AG04449 (cell line): ENCODE measurements at regions of chr3 and their contacts with region 1.

Region 1: GRCh38 chr3:138329127-138329983 is at the start of gene NME9:
- DNase-seq: no peak
- H3K4me3 ChIP-seq: peak within 1 kb of the TSS; percentile 62
- CTCF ChIP-seq: peak; percentile 74

Region 2: GRCh38 chr3:138180375-138181029 is 148.9 kb before region 1 on chr3:
- CTCF ChIA-PET with region 1: interaction called, 11 read pairs
- POLR2A ChIA-PET with region 1: no interaction called
- DNase-seq: no peak
- H3K4me3 ChIP-seq: no peak overlapping the region
- CTCF ChIP-seq: peak; percentile 22

Region 3: GRCh38 chr3:138271189-138271794 is 58.1 kb before region 1 on chr3:
- CTCF ChIA-PET with region 1: no interaction called
- POLR2A ChIA-PET with region 1: no interaction called
- DNase-seq: no peak
- H3K4me3 ChIP-seq: no peak overlapping the region
- CTCF ChIP-seq: no peak

Region 4: DNA sequence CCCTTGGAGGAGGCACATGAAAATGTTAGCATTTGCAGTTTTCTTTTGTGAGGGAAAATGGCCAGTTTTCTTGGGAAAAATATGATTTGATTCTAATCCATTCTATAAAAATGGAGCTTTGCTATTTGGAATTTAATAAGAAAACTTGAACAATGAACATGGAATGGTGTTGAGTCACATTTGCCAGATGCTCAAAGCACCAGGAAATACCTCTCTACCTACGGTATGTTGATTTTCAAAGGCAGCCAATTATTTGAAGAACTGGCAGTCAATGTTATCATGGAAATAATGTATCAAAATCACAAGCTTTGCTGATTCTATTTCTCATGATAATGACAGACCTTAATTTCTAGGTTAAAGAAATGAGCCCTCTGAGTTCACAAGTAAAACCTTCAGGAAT is 14.6 kb before region 1 on chr3:
- CTCF ChIA-PET with region 1: interaction called, 11 read pairs
- POLR2A ChIA-PET with region 1: no interaction called
- DNase-seq: no peak
- H3K4me3 ChIP-seq: no peak overlapping the region
- CTCF ChIP-seq: no peak

Region 5: GRCh38 chr3:138347960-138348753 is 18.8 kb after region 1 on chr3 and contains the start of gene MRAS:
- CTCF ChIA-PET with region 1: interaction called, 31 read pairs
- POLR2A ChIA-PET with region 1: no interaction called
- DNase-seq: no peak
- H3K4me3 ChIP-seq: peak within 1 kb of the TSS; percentile 74
- CTCF ChIP-seq: peak; percentile 41

Region 6: GRCh38 chr3:138426226-138426625 is 96.9 kb after region 1 on chr3:
- CTCF ChIA-PET with region 1: interaction called, 45 read pairs
- POLR2A ChIA-PET with region 1: no interaction called
- DNase-seq: no peak
- H3K4me3 ChIP-seq: no peak overlapping the region
- CTCF ChIP-seq: peak; percentile 66

Region 7: DNA sequence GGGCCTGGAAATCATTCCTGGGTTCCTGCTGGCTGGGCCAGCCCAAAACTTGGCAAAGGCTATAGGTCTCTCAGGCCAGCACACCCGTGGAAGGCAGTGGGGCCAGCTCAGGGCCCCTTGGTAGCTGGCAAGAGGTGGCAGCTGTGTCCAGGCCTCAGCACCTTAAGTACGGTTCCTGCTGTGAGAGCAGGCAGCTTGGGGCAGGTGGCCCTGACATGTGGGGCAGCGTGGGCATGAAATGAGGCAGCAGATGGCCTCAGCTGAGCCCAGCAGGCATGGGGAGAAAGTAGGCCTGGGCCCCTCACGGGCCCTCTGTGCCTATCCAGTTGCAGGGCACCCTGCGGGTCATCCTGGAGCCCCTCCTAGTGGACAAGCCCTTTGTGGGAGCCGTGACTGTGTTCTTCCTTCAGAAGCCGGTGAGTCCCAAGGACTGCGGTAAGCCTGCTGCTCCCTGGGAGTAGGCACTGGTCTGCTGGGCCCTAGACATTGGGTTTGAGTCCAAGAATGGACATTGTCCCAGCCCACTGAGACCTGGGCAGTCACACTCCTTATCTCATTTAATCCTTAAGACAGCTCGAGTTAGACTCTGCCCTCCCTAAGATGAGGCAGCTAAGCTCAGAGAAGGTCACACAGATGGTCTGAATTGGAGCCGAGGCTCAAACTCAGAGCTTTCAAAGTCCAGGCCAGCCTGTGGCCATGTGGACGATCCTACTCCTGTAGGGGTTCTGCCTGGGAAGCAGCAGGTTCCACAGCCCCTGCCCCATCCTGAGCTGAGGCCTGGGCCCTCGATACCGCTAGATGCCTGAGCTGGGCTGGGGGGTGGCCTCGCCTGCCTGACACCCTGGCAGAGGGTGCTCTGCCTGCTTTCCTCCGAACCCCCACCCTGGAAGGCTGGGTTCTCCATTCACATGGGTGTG is 130.5 kb after region 1 on chr3:
- CTCF ChIA-PET with region 1: no interaction called
- POLR2A ChIA-PET with region 1: no interaction called
- DNase-seq: no peak
- H3K4me3 ChIP-seq: no peak overlapping the region
- CTCF ChIP-seq: no peak

Region 8: GRCh38 chr3:138620431-138620830 is 291.1 kb after region 1 on chr3:
- CTCF ChIA-PET with region 1: no interaction called
- POLR2A ChIA-PET with region 1: no interaction called
- DNase-seq: no peak
- H3K4me3 ChIP-seq: no peak overlapping the region
- CTCF ChIP-seq: no peak